ENCODE measurements at regions of chr12 and their contacts with region 1.

Region 1: DNA sequence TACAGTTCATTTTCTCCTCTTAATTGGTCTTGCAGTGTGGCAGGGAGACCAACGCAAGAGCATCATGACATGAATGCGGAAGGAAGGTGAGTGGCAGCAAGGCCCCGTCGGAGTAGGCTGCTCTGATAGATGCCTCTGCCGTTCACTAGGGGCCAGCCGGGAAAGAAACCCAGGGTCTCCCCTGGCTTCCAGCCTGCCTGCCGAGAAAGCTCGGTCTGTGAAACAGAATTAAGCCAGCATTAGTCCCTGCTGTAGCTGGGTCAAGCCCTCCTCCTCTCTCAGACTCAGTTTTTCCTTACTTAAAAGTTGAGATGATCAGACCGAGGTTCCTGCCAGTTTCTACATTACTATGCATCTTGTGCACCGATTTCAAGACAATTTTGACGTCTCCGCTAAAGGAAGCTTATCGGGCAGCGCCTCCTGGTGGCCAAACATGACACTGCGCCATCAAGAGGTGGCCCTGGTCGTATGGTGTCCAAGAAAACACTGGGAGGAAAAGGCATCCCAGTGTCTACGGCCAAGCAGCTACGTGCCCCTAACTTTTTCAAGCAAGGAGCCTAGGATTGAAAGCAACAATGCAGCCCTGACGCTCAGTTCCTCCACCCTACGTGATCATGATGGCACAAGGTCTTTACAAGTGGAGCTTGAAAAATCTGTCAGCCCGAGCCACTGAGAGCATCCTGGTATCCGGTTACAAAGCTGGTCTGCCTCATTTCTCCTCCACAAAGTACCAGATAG is 131.6 kb downstream of the KSR2 start:
- DNase-seq: peak; percentile 78 to 94 (median 89)
- H3K4me3 ChIP-seq: peak overlapping the region in 45 of 59 donors; percentile 2 to 55 (median 38)
- H3K27ac ChIP-seq: peak overlapping the region in 1 of 59 donors; percentile 22
- H3K27me3 ChIP-seq: peaks cover 0 to 9% (median 0%) of the 10 kb centered on the region in 45 donors
- CTCF ChIP-seq: peak; percentile 93 to 100 (median 98)

Region 2: GRCh38 chr12:117025481-117026151 is 811.6 kb before region 1 on chr12:
- intact Hi-C with region 1: loop called in 1 of 2 experiments (anchors 10 kb)
- DNase-seq: peak in 9 of 10 donors; percentile 52 to 83 (median 74)
- H3K4me3 ChIP-seq: no peak overlapping the region
- H3K27ac ChIP-seq: peak overlapping the region in 43 of 59 donors; percentile 7 to 79 (median 52)
- H3K27me3 ChIP-seq: no peaks in the 10 kb centered on the region
- CTCF ChIP-seq: peak; percentile 93 to 100 (median 98)

Region 3: DNA sequence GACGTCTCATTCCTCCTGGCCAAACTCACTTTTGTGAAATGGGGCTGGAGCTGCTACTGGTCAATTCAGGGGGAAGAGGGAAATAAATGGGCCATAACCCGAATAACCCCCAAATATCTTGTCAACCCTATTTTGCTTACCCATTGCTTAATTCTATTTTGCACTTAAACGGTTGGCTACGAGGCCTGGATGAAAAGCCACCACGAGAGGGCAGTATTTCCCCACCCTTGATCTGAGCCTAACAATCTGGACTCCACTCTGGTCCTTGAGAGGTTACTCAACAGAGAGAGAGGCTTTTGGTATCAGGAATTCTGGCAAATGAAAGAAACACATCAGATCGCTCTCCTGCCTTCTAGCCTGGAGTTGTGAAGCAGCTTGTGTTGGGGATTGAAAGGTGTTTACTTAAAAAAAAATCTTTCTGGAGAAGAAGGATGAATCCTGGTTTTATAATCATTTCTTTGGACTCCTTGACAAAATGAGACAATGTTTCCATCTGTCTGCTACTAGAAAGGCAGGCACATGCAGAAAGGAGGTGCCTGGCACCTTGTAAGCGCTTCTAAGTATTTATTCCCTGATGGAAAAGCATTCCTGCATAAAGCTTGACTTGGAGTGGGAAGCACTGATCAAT is 624.5 kb before region 1 on chr12:
- intact Hi-C with region 1: loop called (anchors 5 kb)
- DNase-seq: peak in 9 of 10 donors; percentile 54 to 89 (median 71)
- H3K4me3 ChIP-seq: no peak overlapping the region
- H3K27ac ChIP-seq: peak overlapping the region in 14 of 59 donors; percentile 2 to 48 (median 20)
- H3K27me3 ChIP-seq: no peaks in the 10 kb centered on the region
- CTCF ChIP-seq: peak; percentile 68 to 94 (median 88)

Region 4: GRCh38 chr12:117236456-117237001 is 600.6 kb before region 1 on chr12:
- intact Hi-C with region 1: loop called (anchors 2 to 10 kb)
- DNase-seq: peak; percentile 85 to 96 (median 92)
- H3K4me3 ChIP-seq: no peak overlapping the region
- H3K27ac ChIP-seq: no peak overlapping the region
- H3K27me3 ChIP-seq: peaks cover 0 to 3% (median 0%) of the 10 kb centered on the region in 45 donors
- CTCF ChIP-seq: peak; percentile 70 to 94 (median 87)

Region 5: GRCh38 chr12:117367011-117367638 is 470.0 kb before region 1 on chr12:
- intact Hi-C with region 1: loop called (anchors 1 to 2 kb)
- DNase-seq: peak; percentile 54 to 88 (median 83)
- H3K4me3 ChIP-seq: no peak overlapping the region
- H3K27ac ChIP-seq: no peak overlapping the region
- H3K27me3 ChIP-seq: peaks cover 0 to 28% (median 10%) of the 10 kb centered on the region in 45 donors
- CTCF ChIP-seq: peak; percentile 60 to 99 (median 94)

Region 6: GRCh38 chr12:117596968-117597367 is 240.2 kb before region 1 on chr12:
- intact Hi-C with region 1: loop called in 1 of 2 experiments (anchors 10 kb)
- DNase-seq: peak in 1 of 10 donors; percentile 37
- H3K4me3 ChIP-seq: no peak overlapping the region
- H3K27ac ChIP-seq: no peak overlapping the region
- H3K27me3 ChIP-seq: peaks cover 0 to 1% (median 0%) of the 10 kb centered on the region in 45 donors
- CTCF ChIP-seq: no peak

Region 7: DNA sequence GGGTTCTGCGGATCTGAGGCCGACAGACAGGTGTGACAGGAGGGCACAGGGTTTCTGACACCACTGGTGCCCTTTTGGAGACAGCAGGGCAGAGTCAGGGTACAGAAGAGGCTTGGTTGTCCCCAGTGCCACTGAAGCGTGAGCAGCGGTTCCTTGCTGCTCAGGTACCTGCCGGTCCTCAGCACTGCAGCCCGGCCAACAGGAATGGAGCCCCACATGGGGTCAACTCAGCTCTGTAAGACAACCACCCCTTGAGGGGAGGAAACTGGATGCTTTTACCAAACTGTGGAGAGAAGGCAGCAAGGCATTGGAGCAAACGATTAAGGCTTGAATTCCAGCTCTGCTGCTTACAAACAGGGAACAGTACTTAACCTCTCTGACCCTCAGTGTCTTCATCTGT is 229.4 kb before region 1 on chr12:
- intact Hi-C with region 1: no loop called
- DNase-seq: no peak
- H3K4me3 ChIP-seq: no peak overlapping the region
- H3K27ac ChIP-seq: no peak overlapping the region
- H3K27me3 ChIP-seq: peaks cover 0 to 4% (median 0%) of the 10 kb centered on the region in 45 donors
- CTCF ChIP-seq: no peak